H1 (cell line): ENCODE measurements at regions of chr11 and their contacts with region 1.

Region 1: GRCh38 chr11:122115524-122116379 is at the start of gene BLID:
- DNase-seq: peak in 1 of 2 experiments; percentile 74
- H3K4me3 ChIP-seq: no peak within 1 kb of the TSS
- H3K27ac ChIP-seq: no peak within 1 kb of the TSS
- H3K4me1 ChIP-seq: peaks cover 0 to 3% (median 0%) of the 10 kb centered on the region in 4 experiments; a peak in 1 of 7 replicates
- H3K27me3 ChIP-seq: no peaks in the 10 kb centered on the region; a peak in 1 of 7 replicates
- CTCF ChIP-seq: peak; percentile 60 to 91 (median 75)
- EP300 ChIP-seq: no peak
- POLR2A ChIP-seq: no peak
- RAD21 ChIP-seq: peak; percentile 63 to 64
- total RNA-seq, gene BLID: not detected in 2 replicates

Region 2: DNA sequence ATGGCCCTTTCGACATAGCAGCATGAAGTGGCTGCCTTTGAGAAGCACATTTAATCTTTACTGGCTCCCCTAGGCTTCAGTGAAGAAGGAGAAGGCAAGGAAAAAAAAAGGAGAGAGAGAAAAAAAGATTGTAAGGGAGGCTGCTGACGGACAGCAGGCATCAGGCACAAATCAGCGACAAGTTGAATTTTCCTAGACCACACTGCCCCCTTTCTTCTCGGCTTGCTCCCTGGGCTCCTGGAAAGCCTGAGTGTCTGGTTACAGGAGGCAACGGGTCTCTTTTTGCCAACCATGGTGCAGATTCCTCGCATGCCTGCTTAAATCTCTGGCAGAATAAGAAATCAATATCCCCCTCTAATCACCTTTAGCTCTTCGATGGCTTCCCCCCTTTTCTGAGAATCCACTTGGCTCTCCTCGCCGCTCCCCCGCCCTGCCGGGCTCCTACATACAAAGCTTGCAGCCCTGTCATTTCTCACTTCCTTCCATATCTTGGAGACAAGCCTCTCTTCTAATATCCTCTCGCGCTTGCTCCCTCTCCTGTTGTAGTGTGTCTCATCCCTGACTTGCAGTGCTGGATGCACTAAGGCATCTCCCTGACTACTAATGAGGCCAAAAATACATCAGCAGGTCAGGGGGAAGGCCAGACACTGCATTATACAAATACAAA is 14.0 kb before region 1 on chr11:
- CTCF ChIA-PET with region 1: interaction called, 13 read pairs
- POLR2A ChIA-PET with region 1: no interaction called
- DNase-seq: peak; percentile 58 to 63
- H3K4me3 ChIP-seq: peak overlapping the region; percentile 20 to 58 (median 32); a peak in 5 of 8 replicates
- H3K27ac ChIP-seq: no peak overlapping the region
- H3K4me1 ChIP-seq: peaks cover 2 to 10% (median 7%) of the 10 kb centered on the region in 4 experiments; a peak in 6 of 7 replicates
- H3K27me3 ChIP-seq: peaks cover 0 to 15% (median 12%) of the 10 kb centered on the region in 4 experiments; a peak in 6 of 7 replicates
- CTCF ChIP-seq: peak; percentile 60 to 75 (median 65)
- EP300 ChIP-seq: no peak
- POLR2A ChIP-seq: no peak
- RAD21 ChIP-seq: peak; percentile 79